WTC11 (cell line): ENCODE measurements at regions of chr6 and their contacts with region 1.

Region 1: DNA sequence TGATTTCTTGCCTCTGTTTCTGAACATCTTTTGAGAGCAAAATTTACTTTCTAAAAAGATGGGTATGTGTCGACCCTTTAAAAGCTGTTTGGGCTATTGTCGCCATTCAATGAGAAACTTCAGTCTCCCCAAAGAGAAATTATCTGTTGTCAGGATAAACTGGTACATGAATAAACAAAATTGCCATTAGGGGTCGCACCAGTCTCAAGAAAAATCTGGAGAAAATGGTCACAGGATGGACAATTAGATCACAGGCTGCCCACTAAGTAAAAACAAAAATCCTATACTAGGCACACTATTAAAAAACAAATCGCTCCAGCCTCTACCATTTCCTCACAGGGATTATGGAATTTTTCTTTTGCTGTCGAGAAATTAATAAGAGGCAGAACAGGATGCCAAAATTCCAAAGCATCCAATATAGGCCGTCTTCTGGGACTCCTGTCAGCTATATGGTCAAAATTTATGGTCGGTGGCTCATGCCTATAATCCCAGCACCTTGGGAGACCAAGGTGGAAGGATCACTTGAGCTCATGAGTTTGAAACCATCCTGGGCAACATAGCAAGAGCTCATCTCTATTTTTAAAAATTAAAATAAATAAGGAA is 5.5 kb upstream of the HLA-E start:
- DNase-seq: no peak
- ATAC-seq: no peak
- H3K4me3 Mint-ChIP-seq: no peak overlapping the region
- H3K27ac Mint-ChIP-seq: no peak overlapping the region
- H3K4me1 Mint-ChIP-seq: peaks cover 9% of the 10 kb centered on the region
- H3K27me3 Mint-ChIP-seq: peaks cover 50% of the 10 kb centered on the region
- CTCF ChIP-seq: 0 out of 2 replicates have a peak, but pooled peaks have one; percentile 21

Region 2: DNA sequence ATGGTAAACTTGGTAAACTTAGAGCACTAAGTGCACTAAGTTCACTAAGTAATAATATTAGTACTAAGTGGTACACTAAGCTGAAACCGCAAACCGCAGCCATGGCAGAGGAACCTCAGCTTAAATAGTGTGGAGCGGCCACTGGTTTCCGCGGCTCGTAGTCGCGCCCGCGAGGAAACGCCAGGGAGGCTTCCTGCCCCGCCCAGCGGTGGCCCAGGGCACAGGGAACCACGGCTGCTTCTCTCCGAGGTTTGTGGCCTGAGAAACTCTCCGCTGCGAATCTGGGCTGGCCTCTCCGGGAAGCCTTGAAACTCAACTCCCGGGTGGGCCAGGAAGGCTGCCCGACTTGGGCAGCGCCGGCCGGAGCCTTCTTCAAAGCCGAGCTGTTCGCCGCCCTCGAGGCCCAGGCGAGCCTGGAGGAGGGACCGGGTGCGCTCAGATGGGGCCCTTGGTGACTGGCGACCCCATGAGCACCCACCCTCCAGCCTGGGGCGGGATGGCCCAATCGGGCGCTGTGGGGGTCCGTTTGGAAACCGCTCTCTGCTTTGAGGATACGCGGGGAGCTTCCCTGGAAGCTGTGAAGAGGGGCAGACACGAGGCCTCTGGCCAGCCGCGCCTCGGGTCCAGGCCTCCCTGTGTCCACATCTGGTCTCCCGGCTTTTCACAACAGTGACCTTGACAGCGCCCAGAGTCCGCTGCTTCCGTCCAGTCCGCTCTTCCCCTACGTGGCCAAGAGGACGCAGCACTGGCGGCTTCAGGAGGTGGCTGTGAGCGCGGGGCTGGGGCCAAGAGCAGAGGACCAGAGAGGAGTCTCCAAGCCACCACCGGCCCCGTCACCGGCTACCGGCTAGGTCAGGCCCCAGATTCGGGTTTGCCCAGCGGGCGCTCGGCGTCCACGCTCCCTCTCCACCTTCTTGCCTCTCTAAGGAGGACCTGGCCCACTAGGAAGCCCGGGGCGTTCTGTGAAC is 19.8 kb before region 1 on chr6:
- CTCF ChIA-PET with region 1: interaction called, 10 read pairs
- POLR2A ChIA-PET with region 1: no interaction called
- DNase-seq: peak; percentile 38
- ATAC-seq: peak; percentile 15; the same call in 1 of the 2 replicates
- H3K4me3 Mint-ChIP-seq: no peak overlapping the region
- H3K27ac Mint-ChIP-seq: no peak overlapping the region
- H3K4me1 Mint-ChIP-seq: peaks cover 6% of the 10 kb centered on the region; the same call in 1 of the 2 replicates
- H3K27me3 Mint-ChIP-seq: peaks cover 97% of the 10 kb centered on the region
- CTCF ChIP-seq: no peak

Region 3: DNA sequence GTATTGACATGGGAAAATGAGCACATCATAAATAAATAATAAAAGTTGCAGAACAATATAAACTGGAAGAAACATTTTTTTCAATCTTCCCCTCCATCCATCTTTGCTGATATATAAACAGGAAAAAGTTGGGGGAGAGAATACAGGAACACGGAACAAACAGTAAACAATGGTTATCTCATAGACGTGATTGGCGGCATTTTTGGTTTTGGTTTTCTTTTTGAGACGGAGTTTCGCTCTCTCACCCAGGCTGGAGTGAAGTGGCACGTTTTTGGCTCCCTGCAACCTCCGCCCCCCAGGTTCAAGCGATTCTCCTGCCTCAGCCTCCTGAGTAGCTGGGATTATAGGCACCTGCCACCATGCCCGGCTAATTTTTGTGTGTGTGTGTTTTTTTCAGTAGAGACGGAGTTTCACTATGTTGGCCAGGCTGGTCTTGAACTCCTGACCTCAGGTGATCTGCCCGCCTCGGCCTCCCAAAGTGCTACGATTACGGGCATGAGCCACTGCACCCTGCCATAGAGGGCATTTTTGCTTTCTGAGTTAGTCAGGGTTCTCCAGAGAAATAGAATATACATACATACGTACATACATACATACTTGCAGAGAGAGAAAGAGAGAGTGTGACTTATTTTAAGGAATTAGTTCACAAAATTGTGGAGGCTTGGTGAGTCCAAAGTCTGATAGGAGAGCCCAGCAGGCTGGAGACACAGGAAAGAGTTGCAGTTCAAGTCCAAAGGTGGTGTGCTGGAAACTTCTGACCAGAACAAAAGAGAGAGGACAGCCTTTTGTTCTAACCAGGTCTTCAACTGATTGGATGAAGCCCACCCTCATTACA is 49.9 kb after region 1 on chr6:
- CTCF ChIA-PET with region 1: interaction called, 44 read pairs
- POLR2A ChIA-PET with region 1: no interaction called
- DNase-seq: no peak
- ATAC-seq: no peak
- H3K4me3 Mint-ChIP-seq: no peak overlapping the region
- H3K27ac Mint-ChIP-seq: no peak overlapping the region
- H3K4me1 Mint-ChIP-seq: no peaks in the 10 kb centered on the region
- H3K27me3 Mint-ChIP-seq: no peaks in the 10 kb centered on the region; the same call in 1 of the 2 replicates
- CTCF ChIP-seq: no peak

Region 4: DNA sequence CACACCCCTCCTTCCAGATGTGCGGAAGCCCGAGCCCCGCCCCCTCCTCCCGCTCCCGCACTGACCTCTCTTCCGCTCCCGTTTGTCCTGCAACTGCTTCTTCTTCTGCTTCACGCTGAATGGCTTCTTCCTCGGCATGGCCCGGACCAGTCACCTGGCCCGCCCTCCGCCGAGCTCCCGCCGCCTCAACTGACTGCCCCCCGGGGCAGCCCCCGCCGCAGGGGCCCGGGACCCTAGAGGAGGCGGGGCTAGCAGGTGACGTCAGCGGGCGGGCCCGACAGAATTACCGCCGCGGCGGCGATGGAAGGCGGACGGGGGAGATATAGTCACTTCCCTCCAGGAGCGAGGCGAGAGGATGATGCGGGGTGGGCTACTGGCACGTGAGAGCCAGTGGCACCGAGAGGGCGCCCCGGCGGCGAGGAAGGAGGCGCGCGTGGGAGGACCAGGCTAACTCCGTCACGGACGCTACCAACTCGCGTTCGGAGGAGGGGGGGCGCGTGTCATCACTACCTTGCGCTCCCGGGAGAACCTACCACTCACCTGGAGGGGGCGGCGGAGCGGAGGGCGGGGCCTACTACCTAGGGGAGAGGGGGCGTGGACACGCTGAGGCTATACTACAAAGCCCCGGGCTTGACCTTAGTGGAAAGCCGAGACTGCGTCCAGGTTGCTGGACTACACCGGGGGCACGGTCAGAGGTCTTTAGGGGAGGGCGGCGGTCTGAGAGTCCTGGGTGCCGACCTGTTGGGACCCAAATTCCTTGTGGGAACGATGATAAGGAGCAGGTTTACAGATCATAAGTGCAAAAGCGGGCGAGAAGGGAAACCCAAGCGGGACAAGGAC is 72.5 kb after region 1 on chr6 and contains the start of gene GNL1:
- CTCF ChIA-PET with region 1: interaction called, 13 read pairs
- POLR2A ChIA-PET with region 1: interaction called, 3 read pairs
- DNase-seq: peak; percentile 97
- ATAC-seq: peak; percentile 87
- H3K4me3 Mint-ChIP-seq: peak within 1 kb of the TSS; percentile 92
- H3K27ac Mint-ChIP-seq: peak within 1 kb of the TSS; percentile 99
- H3K4me1 Mint-ChIP-seq: peaks cover 20% of the 10 kb centered on the region
- H3K27me3 Mint-ChIP-seq: no peaks in the 10 kb centered on the region
- CTCF ChIP-seq: no peak
- total RNA-seq, gene GNL1: 69.1 to 85.7 TPM (median 72.8 TPM) in 3 replicates

Region 5: DNA sequence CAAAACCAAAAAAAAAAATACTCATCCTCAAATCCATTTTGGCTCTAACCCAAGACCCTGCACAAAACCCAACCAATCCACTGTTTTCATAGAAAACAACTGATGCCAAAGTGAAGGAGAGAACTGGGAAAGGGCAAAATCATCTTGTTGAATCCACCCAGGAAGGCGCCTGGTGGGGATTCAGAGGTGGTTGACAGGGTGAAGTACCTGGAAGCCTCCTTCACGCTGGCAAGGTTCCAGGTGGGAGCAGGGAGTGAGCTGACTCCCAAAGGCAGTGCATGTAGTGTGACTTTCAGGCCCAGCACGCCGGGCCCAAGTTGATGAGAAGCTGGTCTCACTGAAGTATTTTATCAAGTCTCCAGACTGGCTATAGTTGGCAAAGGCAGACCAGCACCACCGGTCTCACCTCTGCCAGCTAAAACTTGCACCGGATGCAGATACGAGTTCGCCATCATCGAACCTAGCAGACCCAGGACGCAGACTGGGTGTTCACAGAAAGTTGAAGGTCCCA is 116.7 kb after region 1 on chr6:
- CTCF ChIA-PET with region 1: interaction called, 28 read pairs
- POLR2A ChIA-PET with region 1: interaction called, 4 read pairs
- DNase-seq: no peak
- ATAC-seq: no peak
- H3K4me3 Mint-ChIP-seq: no peak overlapping the region
- H3K27ac Mint-ChIP-seq: no peak overlapping the region
- H3K4me1 Mint-ChIP-seq: no peaks in the 10 kb centered on the region
- H3K27me3 Mint-ChIP-seq: no peaks in the 10 kb centered on the region
- CTCF ChIP-seq: no peak